Activated CD8-positive, alpha-beta memory T cell treated with anti-CD3 and anti-CD28 coated beads, Interleukin-2, amount 10 ng/mL, durations not matched to agents 7 days and 5 days (primary cell): ENCODE measurements at regions of chr15 and their contacts with region 1.

Region 1: DNA sequence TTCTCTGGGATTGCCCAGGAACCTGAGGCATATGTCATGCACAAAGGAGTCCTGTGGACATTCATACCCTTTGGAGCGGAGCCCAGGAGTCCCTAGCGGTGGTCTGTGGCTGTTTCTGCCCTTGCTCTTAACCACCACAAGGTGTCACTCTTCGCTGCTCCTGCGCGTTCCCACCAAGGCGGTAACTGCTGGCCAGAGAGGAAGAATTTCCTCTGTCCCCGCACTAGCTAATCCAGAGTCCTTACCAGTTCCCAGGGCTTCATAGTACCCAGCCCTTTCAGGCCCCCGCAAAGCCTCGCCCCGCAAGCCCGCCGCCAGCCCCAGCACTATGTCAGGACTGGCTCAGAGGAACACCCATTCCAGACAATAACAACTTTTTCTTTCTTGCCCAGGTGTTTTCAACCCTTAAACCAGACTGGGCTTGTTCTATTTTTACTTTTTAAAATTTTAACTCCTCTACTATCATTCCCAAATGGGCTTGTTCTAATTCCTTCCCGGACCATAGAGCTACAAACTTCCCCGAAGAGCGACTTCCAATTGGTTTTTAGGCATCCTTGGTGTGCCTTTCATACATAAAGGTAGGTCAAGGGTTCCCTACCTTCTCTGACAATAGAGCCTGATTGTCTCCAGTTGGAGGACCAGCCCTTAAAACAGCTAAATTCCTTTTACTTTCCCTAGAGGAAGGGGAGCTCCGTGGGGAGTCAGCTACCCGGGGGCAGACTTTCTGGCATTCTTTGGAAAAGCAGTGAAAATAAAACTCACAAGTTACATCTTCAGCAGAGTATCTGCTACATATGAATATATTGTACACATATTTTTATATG is 31.8 kb upstream of the ZNF774 start:
- DNase-seq: peak; percentile 82
- ATAC-seq: peak; percentile 99
- H3K4me3 Mint-ChIP-seq: no peak overlapping the region
- H3K27ac Mint-ChIP-seq: peak overlapping the region; percentile 45
- H3K4me1 Mint-ChIP-seq: peaks cover 11% of the 10 kb centered on the region
- H3K27me3 Mint-ChIP-seq: no peaks in the 10 kb centered on the region

Region 2: DNA sequence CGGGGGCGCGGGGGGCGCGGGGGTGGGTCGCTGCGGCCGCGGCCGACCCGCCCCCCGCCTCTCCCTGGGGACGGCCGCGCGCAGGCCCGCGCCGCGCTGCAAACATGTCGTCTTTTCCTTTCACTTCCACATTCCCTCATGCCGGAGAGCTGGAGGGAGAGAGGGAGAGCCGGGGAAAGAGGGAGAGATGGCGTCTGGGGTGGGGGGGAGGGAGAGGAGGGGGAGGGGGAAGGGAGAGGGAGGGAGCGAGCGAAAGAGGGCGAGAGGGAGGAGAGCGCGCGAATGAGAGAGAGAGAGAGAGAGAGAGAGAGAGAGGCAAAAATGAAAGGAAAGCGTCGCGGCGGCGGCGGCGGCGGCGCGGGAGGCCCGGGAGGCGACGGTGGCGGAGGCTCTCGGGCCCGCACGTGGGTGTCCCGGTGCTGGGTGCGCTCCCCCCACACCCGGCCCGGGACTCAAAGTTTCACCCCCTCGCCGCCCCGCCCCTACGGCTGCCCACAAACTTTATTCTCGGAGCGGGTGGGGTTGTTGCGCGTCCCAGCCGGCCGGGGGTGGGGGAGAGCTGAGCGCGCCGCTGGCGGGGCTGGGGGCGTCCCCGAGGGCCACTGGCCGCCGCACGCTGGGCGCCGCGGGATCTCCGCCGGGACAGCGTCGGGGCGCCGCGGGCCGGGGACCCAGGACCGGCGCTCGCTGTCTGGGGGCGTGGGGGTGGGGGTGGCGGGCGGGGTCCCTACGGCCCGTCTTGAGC is 318.4 kb before region 1 on chr15:
- CTCF ChIA-PET with region 1: no interaction called
- DNase-seq: peak; percentile 70
- ATAC-seq: peak; percentile 60
- H3K4me3 Mint-ChIP-seq: peak overlapping the region; percentile 86
- H3K27ac Mint-ChIP-seq: peak overlapping the region; percentile 83
- H3K4me1 Mint-ChIP-seq: peaks cover 39% of the 10 kb centered on the region
- H3K27me3 Mint-ChIP-seq: no peaks in the 10 kb centered on the region

Region 3: GRCh38 chr15:90086868-90087268 is 233.4 kb before region 1 on chr15:
- CTCF ChIA-PET with region 1: no interaction called
- DNase-seq: peak; percentile 69
- ATAC-seq: peak; percentile 71
- H3K4me3 Mint-ChIP-seq: no peak overlapping the region
- H3K27ac Mint-ChIP-seq: no peak overlapping the region
- H3K4me1 Mint-ChIP-seq: peaks cover 14% of the 10 kb centered on the region
- H3K27me3 Mint-ChIP-seq: no peaks in the 10 kb centered on the region

Region 4: DNA sequence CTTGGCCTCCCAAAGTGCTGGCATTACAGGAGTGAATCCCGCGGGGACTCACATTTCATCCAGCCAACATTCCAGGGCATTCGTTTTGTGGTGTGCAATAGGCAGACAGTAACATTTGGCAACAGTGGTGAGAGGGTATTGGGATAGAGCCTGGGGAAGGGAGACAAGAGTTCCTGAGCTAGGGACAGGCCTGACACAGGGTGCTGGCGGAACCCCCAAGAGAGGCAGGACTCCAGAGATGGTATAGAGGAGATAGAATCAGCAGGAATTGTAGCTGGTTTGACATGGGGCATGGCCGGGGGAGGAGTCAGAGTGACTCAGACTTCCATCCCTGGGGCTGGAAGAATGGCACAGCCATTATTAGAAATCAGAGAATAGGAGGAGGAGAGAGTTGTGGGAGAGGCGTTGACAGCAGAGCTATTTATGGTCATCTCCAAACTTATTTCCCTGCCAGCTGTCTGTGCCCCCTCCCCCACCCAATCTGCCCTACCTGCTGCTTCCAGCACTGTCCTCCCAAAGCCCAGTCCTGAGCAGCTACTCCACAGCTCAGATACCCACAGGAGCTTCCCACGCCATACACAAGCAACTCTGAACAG is 213.7 kb before region 1 on chr15:
- CTCF ChIA-PET with region 1: no interaction called
- DNase-seq: no peak
- ATAC-seq: no peak
- H3K4me3 Mint-ChIP-seq: no peak overlapping the region
- H3K27ac Mint-ChIP-seq: no peak overlapping the region
- H3K4me1 Mint-ChIP-seq: peaks cover 6% of the 10 kb centered on the region
- H3K27me3 Mint-ChIP-seq: peaks cover 4% of the 10 kb centered on the region

Region 5: GRCh38 chr15:90291679-90292356 is 28.5 kb before region 1 on chr15:
- CTCF ChIA-PET with region 1: interaction called, 10 read pairs
- DNase-seq: peak; percentile 55
- ATAC-seq: no peak
- H3K4me3 Mint-ChIP-seq: no peak overlapping the region
- H3K27ac Mint-ChIP-seq: no peak overlapping the region
- H3K4me1 Mint-ChIP-seq: peaks cover 18% of the 10 kb centered on the region
- H3K27me3 Mint-ChIP-seq: peaks cover 10% of the 10 kb centered on the region

Region 6: DNA sequence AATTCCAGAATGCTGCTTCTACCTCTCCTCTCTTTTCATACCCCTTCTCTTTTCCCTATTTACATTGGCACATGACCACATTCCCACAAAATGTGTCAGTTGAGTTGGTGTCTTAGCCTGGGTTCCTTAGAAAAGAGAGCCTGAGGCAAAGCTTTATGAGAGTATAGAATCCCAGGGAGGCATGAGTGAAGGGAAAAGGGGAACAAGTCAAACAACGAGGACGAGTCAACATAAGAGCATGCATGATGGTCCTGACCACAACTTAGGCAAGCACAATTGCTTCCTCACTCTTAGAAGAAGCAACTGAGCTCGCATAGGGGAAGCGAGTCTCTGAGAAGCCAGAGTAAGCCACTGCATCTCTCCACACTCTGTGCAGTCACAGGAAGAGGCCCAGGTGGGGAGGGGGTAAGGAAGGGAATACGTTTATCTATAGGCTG is 16.4 kb after region 1 on chr15:
- CTCF ChIA-PET with region 1: interaction called, 24 read pairs
- DNase-seq: no peak
- ATAC-seq: peak; percentile 42
- H3K4me3 Mint-ChIP-seq: no peak overlapping the region
- H3K27ac Mint-ChIP-seq: no peak overlapping the region
- H3K4me1 Mint-ChIP-seq: peaks cover 11% of the 10 kb centered on the region
- H3K27me3 Mint-ChIP-seq: no peaks in the 10 kb centered on the region

Region 7: DNA sequence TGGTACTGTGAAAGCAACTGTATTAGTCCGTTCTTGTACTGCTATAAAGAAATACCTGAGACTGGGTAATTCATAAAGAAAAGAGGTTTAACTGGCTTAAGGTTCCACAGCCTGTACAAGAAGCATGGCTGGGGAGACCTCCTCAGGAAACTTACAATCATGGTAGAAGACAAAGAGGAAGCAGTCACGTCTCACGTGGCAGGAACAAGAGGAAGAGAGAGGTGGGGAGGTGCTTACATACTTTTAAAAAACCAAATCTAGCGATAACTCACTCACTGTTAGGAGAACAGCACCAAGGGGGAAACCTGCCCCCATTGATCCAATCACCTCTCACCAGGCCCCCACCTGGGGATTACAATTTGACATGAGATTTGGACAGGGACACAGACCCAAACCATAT is 116.7 kb after region 1 on chr15:
- CTCF ChIA-PET with region 1: interaction called, 18 read pairs
- DNase-seq: no peak
- ATAC-seq: no peak
- H3K4me3 Mint-ChIP-seq: no peak overlapping the region
- H3K27ac Mint-ChIP-seq: no peak overlapping the region
- H3K4me1 Mint-ChIP-seq: peaks cover 18% of the 10 kb centered on the region
- H3K27me3 Mint-ChIP-seq: no peaks in the 10 kb centered on the region

Region 8: GRCh38 chr15:90482124-90483011 is 162.1 kb after region 1 on chr15:
- CTCF ChIA-PET with region 1: interaction called, 71 read pairs
- DNase-seq: peak; percentile 67
- ATAC-seq: peak; percentile 43
- H3K4me3 Mint-ChIP-seq: no peak overlapping the region
- H3K27ac Mint-ChIP-seq: no peak overlapping the region
- H3K4me1 Mint-ChIP-seq: peaks cover 47% of the 10 kb centered on the region
- H3K27me3 Mint-ChIP-seq: no peaks in the 10 kb centered on the region

Region 9: GRCh38 chr15:90529371-90530249 is 209.3 kb after region 1 on chr15 and contains the start of gene CRTC3:
- CTCF ChIA-PET with region 1: interaction called, 12 read pairs
- DNase-seq: peak; percentile 65
- ATAC-seq: peak; percentile 92
- H3K4me3 Mint-ChIP-seq: peak within 1 kb of the TSS; percentile 100
- H3K27ac Mint-ChIP-seq: peak within 1 kb of the TSS; percentile 87
- H3K4me1 Mint-ChIP-seq: peaks cover 42% of the 10 kb centered on the region
- H3K27me3 Mint-ChIP-seq: no peaks in the 10 kb centered on the region
- total RNA-seq, gene CRTC3: 62.3 to 79.1 TPM

Region 10: DNA sequence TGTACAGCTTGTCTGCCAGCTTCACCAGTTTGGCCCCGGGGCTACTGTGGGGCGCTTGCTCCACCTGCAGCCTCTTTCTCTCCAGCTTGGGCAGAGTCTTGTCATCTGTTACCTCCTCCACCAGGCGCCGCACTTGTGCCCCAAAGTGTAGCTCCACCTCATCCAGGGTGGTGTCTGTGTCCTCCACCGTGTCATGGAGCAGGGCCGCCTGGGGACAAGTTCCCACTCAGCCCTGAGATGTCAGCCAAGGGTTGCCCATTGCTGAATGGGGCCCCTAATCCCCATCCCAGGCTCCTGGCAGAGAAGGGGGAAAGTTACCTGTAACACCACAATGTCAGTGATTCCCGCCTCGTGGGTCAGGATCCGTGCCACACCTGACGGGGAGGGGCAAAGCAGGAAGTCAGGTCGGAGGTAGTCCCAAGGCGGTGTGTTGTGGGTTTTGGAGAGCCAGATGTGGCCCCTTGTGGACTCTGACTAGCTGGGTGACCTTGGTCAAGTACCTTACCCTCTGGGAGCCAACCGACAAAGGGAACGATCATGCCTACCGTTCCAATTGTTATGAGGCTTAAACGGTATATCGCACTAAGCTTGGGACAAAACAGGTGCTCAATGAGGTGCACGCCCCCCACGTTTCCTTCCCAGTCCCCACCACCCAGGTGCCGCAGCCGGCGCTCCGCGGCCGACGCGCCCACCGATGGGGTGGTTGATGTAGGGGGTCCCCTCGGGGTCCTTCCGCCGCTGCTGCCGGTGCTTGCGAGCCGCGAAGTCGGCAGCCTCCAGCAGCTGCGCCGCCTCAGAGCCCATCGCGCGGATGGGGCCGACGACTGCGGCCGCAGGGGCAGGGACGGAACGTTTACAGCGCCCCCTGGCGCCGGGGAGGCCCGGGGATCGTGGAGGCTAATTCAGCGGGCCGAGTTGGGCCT is 611.7 kb after region 1 on chr15 and contains the start of gene HDDC3:
- CTCF ChIA-PET with region 1: interaction called, 13 read pairs
- DNase-seq: peak; percentile 95
- ATAC-seq: peak; percentile 52
- H3K4me3 Mint-ChIP-seq: peak within 1 kb of the TSS; percentile 99
- H3K27ac Mint-ChIP-seq: peak within 1 kb of the TSS; percentile 100
- H3K4me1 Mint-ChIP-seq: peaks cover 61% of the 10 kb centered on the region
- H3K27me3 Mint-ChIP-seq: no peaks in the 10 kb centered on the region
- total RNA-seq, gene HDDC3: 33.2 to 39.3 TPM

Region 11: GRCh38 chr15:90954712-90955671 is 634.7 kb after region 1 on chr15 and contains the start of gene RCCD1:
- CTCF ChIA-PET with region 1: no interaction called
- DNase-seq: peak; percentile 97
- ATAC-seq: peak; percentile 94
- H3K4me3 Mint-ChIP-seq: peak within 1 kb of the TSS; percentile 86
- H3K27ac Mint-ChIP-seq: peak within 1 kb of the TSS; percentile 95
- H3K4me1 Mint-ChIP-seq: peaks cover 21% of the 10 kb centered on the region
- H3K27me3 Mint-ChIP-seq: no peaks in the 10 kb centered on the region
- total RNA-seq, gene RCCD1: 35.4 to 50.1 TPM